Activated CD8-positive, alpha-beta T cell treated with anti-CD3 and anti-CD28 coated beads for 36 hours (primary cell): ENCODE measurements at regions of chr22 and their contacts with region 1.

Region 1: DNA sequence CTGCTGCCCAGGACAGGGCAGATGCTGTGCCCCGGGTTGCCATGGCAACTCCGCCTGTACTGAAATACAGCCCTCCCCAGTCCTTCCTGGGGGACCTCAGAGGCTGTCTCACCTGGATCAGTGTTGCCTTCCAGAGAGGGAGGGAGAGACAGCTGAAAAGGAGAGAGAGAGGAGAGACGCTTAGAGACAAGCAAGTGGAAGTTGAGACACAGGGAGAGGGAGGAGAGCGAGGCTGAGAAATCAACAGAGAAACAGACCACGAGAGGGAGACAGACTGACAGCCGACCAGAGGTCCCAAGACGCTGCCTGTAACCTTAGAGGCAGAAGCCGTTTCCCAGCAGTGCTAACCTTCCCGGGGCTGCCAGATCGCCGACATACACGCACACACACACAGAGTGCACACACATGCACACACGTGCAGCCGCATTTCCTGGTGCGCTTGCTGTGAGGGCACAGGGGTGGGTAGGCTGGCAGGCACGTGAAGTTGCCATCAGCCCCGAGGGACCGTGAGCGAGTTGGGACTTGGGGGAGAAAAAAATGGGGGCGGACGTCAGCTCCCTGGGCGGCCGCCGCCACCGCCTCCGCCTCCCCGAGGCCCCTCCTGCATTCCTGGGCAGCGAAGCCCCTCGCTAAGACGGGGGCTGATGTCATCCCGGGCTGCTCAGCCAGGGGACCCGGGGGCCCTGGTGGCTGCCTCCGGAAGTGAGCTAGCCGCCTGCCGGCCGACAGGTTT is 88.6 kb upstream of the CRYBB3 start:
- DNase-seq: peak; percentile 68
- ATAC-seq: peak; percentile 76
- H3K4me3 Mint-ChIP-seq: peak overlapping the region; percentile 78
- H3K27ac Mint-ChIP-seq: peak overlapping the region; percentile 55
- H3K4me1 Mint-ChIP-seq: peaks cover 29% of the 10 kb centered on the region
- H3K27me3 Mint-ChIP-seq: no peaks in the 10 kb centered on the region
- CTCF ChIP-seq: peak; percentile 72

Region 2: GRCh38 chr22:25048659-25049647 is 62.1 kb before region 1 on chr22:
- CTCF ChIA-PET with region 1: interaction called, 18 read pairs
- POLR2A ChIA-PET with region 1: no interaction called
- intact Hi-C with region 1: no loop called
- DNase-seq: peak; percentile 83
- ATAC-seq: peak; percentile 98
- H3K4me3 Mint-ChIP-seq: no peak overlapping the region
- H3K27ac Mint-ChIP-seq: no peak overlapping the region
- H3K4me1 Mint-ChIP-seq: peaks cover 6% of the 10 kb centered on the region
- H3K27me3 Mint-ChIP-seq: no peaks in the 10 kb centered on the region
- CTCF ChIP-seq: peak; percentile 80

Region 3: DNA sequence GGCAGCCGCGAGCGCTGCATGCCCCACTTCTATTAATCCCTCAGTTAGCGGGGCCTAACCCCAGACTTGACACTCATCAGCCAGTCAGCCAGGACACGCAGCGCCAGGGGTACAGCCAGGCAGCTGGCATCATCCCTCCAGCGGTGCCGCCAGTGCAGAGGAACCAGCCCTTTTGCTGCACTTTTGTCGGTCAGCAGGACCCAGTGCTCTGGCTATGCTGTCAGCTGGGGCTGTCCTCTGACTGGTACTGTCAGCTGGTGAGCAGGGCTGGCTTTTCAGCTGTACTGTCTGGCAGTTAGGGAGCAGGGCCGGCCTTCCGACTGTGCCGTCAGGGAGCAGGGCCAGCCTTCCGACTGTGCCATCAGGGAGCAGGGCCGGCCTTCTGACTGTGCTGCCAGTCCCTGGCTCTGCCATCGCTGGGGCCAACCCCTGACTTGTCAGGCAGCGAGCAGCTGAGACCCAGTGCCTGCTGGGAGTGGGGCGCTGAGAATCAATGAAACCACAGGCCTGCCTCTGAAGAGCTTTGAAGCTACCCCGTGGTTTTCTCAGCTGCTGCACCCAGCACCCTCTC is 43.1 kb before region 1 on chr22:
- CTCF ChIA-PET with region 1: interaction called, 13 read pairs
- POLR2A ChIA-PET with region 1: interaction called, 5 read pairs
- intact Hi-C with region 1: no loop called
- DNase-seq: peak; percentile 90
- ATAC-seq: peak; percentile 74
- H3K4me3 Mint-ChIP-seq: peak overlapping the region; percentile 78
- H3K27ac Mint-ChIP-seq: peak overlapping the region; percentile 97
- H3K4me1 Mint-ChIP-seq: peaks cover 91% of the 10 kb centered on the region
- H3K27me3 Mint-ChIP-seq: no peaks in the 10 kb centered on the region
- CTCF ChIP-seq: no peak

Region 4: GRCh38 chr22:25081409-25081824 is 29.6 kb before region 1 on chr22:
- CTCF ChIA-PET with region 1: interaction called, 33 read pairs
- POLR2A ChIA-PET with region 1: interaction called, 11 read pairs
- intact Hi-C with region 1: no loop called
- DNase-seq: peak; percentile 79
- ATAC-seq: peak; percentile 19
- H3K4me3 Mint-ChIP-seq: no peak overlapping the region
- H3K27ac Mint-ChIP-seq: no peak overlapping the region
- H3K4me1 Mint-ChIP-seq: peaks cover 85% of the 10 kb centered on the region
- H3K27me3 Mint-ChIP-seq: no peaks in the 10 kb centered on the region
- CTCF ChIP-seq: peak; percentile 72

Region 5: GRCh38 chr22:25202290-25202921 is 91.4 kb after region 1 on chr22:
- CTCF ChIA-PET with region 1: interaction called, 12 read pairs
- POLR2A ChIA-PET with region 1: no interaction called
- intact Hi-C with region 1: no loop called
- DNase-seq: peak; percentile 74
- ATAC-seq: peak; percentile 73
- H3K4me3 Mint-ChIP-seq: no peak overlapping the region
- H3K27ac Mint-ChIP-seq: no peak overlapping the region
- H3K4me1 Mint-ChIP-seq: no peaks in the 10 kb centered on the region
- H3K27me3 Mint-ChIP-seq: no peaks in the 10 kb centered on the region
- CTCF ChIP-seq: peak; percentile 95